T-cell (primary cell): ENCODE measurements at regions of chr7 and their contacts with region 1.

Region 1: GRCh38 chr7:105896407-105896911 is 20.1 kb upstream of the ATXN7L1 start:
- DNase-seq: peak in 9 of 35 experiments; percentile 3 to 32 (median 13)
- ATAC-seq: peak; percentile 69 to 87 (median 83)
- H3K4me3 ChIP-seq: no peak overlapping the region
- H3K4me3 Mint-ChIP-seq: no peak overlapping the region
- H3K27ac ChIP-seq: no peak overlapping the region
- H3K27ac Mint-ChIP-seq: peak overlapping the region in 1 of 2 donors; percentile 12
- H3K4me1 ChIP-seq: peaks cover 5 to 10% of the 10 kb centered on the region in 2 experiments
- H3K4me1 Mint-ChIP-seq: peaks cover 24 to 38% (median 28%) of the 10 kb centered on the region in 3 donors
- H3K27me3 ChIP-seq: no peaks in the 10 kb centered on the region
- H3K27me3 Mint-ChIP-seq: no peaks in the 10 kb centered on the region

Region 2: GRCh38 chr7:105849122-105849855 is 47.2 kb before region 1 on chr7:
- CTCF ChIA-PET with region 1: no interaction called
- POLR2A ChIA-PET with region 1: interaction called in 1 of 2 experiments, 12 read pairs
- DNase-seq: peak; percentile 34 to 78 (median 59)
- ATAC-seq: peak; percentile 89 to 95 (median 92)
- H3K4me3 ChIP-seq: peak overlapping the region; percentile 10 to 19
- H3K4me3 Mint-ChIP-seq: peak overlapping the region; percentile 52 to 75 (median 75)
- H3K27ac ChIP-seq: peak overlapping the region; percentile 85
- H3K27ac Mint-ChIP-seq: peak overlapping the region; percentile 91 to 94
- H3K4me1 ChIP-seq: peaks cover 41 to 53% of the 10 kb centered on the region in 2 experiments
- H3K4me1 Mint-ChIP-seq: peaks cover 71 to 72% (median 72%) of the 10 kb centered on the region in 3 donors
- H3K27me3 ChIP-seq: no peaks in the 10 kb centered on the region
- H3K27me3 Mint-ChIP-seq: no peaks in the 10 kb centered on the region

Region 3: GRCh38 chr7:105885387-105886111 is 10.9 kb before region 1 on chr7:
- CTCF ChIA-PET with region 1: interaction called, 4 to 12 read pairs
- POLR2A ChIA-PET with region 1: interaction called in 1 of 2 experiments, 3 read pairs
- DNase-seq: peak in 19 of 35 experiments; percentile 6 to 48 (median 21)
- ATAC-seq: peak in 3 of 4 experiments; percentile 27 to 47 (median 45)
- H3K4me3 ChIP-seq: no peak overlapping the region
- H3K4me3 Mint-ChIP-seq: no peak overlapping the region
- H3K27ac ChIP-seq: no peak overlapping the region
- H3K27ac Mint-ChIP-seq: peak overlapping the region in 1 of 2 donors; percentile 58
- H3K4me1 ChIP-seq: peaks cover 15 to 25% of the 10 kb centered on the region in 2 experiments
- H3K4me1 Mint-ChIP-seq: peaks cover 52 to 62% (median 54%) of the 10 kb centered on the region in 3 donors
- H3K27me3 ChIP-seq: no peaks in the 10 kb centered on the region
- H3K27me3 Mint-ChIP-seq: no peaks in the 10 kb centered on the region

Region 4: DNA sequence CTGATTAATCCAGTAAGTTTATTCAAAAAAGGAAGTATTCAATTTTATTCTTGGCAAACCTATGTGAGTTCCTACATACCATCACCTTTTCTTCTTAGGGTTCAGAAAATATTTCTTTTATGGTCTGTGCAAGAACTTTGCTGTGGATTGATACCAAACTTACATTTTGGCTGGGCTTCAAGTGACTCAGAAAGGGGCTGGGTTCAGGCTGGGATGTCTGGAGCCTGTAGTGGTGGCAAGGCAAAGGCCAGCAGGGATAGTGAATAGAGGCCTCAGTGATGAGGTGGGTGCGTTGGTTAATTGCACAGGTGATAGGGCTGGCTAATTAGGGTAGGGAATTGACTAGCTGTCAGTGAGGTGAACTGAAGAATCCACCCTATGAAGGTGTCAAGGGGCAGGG is 20.1 kb after region 1 on chr7:
- CTCF ChIA-PET with region 1: no interaction called
- POLR2A ChIA-PET with region 1: no interaction called
- DNase-seq: no peak
- ATAC-seq: no peak
- H3K4me3 ChIP-seq: no peak overlapping the region
- H3K4me3 Mint-ChIP-seq: no peak overlapping the region
- H3K27ac ChIP-seq: no peak overlapping the region
- H3K27ac Mint-ChIP-seq: no peak overlapping the region
- H3K4me1 ChIP-seq: no peaks in the 10 kb centered on the region
- H3K4me1 Mint-ChIP-seq: no peaks in the 10 kb centered on the region
- H3K27me3 ChIP-seq: no peaks in the 10 kb centered on the region
- H3K27me3 Mint-ChIP-seq: no peaks in the 10 kb centered on the region